ENCODE measurements at regions of chr2 and their contacts with region 1.

Region 1: GRCh38 chr2:95402370-95403203 is at the start of gene FAHD2A:
- DNase-seq: peak; percentile 92 to 93
- ATAC-seq: peak; percentile 93 to 96 (median 94)
- H3K4me3 ChIP-seq: peak within 1 kb of the TSS; percentile 85
- H3K4me3 Mint-ChIP-seq: peak within 1 kb of the TSS; percentile 99
- H3K27ac ChIP-seq: peak within 1 kb of the TSS; percentile 76
- H3K27ac Mint-ChIP-seq: peak within 1 kb of the TSS; percentile 97
- H3K4me1 ChIP-seq: peaks cover 23% of the 10 kb centered on the region
- H3K4me1 Mint-ChIP-seq: peaks cover 27 to 29% of the 10 kb centered on the region in 2 donors
- H3K27me3 ChIP-seq: no peaks in the 10 kb centered on the region
- H3K27me3 Mint-ChIP-seq: no peaks in the 10 kb centered on the region
- CTCF ChIP-seq: no peak
- total RNA-seq, gene FAHD2A: 21.6 to 25.4 (median 22.0) TPM

Region 2: DNA sequence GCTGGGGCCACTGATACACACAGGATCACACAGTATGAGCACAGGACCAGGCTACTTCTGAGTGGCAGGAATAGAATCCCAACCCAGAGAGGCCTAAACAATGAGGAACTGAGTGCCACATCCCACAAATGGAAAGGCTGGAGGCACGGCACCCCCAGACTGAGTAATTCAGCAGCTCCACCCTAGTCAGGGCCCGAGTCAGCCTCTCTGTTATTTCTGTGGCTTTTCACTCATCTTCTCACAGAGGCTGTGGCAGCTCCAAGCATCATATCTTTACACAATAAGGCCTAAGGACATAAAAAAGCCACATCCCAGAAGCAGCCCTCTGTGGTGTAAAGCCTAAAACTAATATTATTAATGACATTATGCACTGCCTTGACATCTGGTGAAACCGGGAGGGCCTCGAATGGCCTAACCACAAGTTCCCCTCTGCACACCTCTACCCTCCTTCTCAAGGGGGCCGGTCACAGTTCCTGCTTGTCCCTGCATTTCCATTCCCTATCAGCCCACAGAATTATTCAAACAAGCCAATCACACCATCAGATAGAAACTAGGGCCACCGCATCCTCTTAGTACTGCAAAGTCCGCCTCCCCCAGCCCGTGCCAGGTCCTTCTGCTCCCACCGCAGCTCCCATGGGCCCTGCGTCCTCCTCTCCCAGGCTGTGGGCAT is 389.6 kb before region 1 on chr2:
- intact Hi-C with region 1: no loop called
- DNase-seq: no peak
- ATAC-seq: no peak
- H3K4me3 ChIP-seq: no peak overlapping the region
- H3K4me3 Mint-ChIP-seq: no peak overlapping the region
- H3K27ac ChIP-seq: no peak overlapping the region
- H3K27ac Mint-ChIP-seq: no peak overlapping the region
- H3K4me1 ChIP-seq: no peaks in the 10 kb centered on the region
- H3K4me1 Mint-ChIP-seq: no peaks in the 10 kb centered on the region
- H3K27me3 ChIP-seq: no peaks in the 10 kb centered on the region
- H3K27me3 Mint-ChIP-seq: peaks cover 0 to 4% of the 10 kb centered on the region in 2 donors
- CTCF ChIP-seq: no peak

Region 3: GRCh38 chr2:95165129-95166064 is 237.2 kb before region 1 on chr2 and contains the start of gene ZNF2:
- intact Hi-C with region 1: loop called (anchors 1 kb)
- DNase-seq: peak; percentile 95 to 99
- ATAC-seq: peak; percentile 94 to 96 (median 95)
- H3K4me3 ChIP-seq: peak within 1 kb of the TSS; percentile 97
- H3K4me3 Mint-ChIP-seq: peak within 1 kb of the TSS; percentile 100
- H3K27ac ChIP-seq: peak within 1 kb of the TSS; percentile 94
- H3K27ac Mint-ChIP-seq: peak within 1 kb of the TSS; percentile 95 to 98
- H3K4me1 ChIP-seq: peaks cover 12% of the 10 kb centered on the region
- H3K4me1 Mint-ChIP-seq: peaks cover 19 to 28% of the 10 kb centered on the region in 2 donors
- H3K27me3 ChIP-seq: no peaks in the 10 kb centered on the region
- H3K27me3 Mint-ChIP-seq: no peaks in the 10 kb centered on the region
- CTCF ChIP-seq: no peak
- total RNA-seq, gene ZNF2: 0.96 to 2.7 (median 2.4) TPM